Left ventricle myocardium superior (tissue), 1 donor: ENCODE measurements at regions of chrX and their contacts with region 1.

Region 1: DNA sequence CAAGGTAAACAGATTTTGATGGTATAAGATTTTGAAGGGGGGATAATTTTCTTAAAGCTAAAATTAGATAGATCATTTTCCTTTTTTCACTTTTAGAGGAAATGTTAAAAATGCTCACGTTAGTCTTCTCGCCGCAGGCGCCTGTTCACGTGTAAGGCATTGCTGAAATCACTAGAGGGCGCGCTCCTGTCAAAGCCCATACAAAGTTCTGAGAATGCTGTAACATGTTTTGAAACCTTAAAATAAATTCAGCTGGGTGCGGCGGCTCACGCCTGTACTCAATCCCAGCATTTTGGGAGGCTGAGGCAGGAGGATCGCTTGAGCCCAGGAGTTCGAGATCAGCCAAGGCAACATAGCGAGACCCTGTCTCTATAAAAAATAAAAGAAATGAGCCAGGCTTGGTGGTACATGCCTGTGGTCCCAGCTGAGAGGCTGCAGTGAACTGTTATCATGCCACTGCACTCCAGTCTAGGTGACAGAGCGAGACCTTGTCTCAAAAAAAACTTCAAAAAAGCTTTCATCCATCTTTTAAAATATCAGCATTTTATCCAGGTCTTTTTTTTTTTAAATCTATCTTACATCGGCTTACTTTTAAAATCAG is 138.0 kb downstream of the RBMX2 start:
- DNase-seq: peak; percentile 36
- ATAC-seq: peak; percentile 39

Region 2: DNA sequence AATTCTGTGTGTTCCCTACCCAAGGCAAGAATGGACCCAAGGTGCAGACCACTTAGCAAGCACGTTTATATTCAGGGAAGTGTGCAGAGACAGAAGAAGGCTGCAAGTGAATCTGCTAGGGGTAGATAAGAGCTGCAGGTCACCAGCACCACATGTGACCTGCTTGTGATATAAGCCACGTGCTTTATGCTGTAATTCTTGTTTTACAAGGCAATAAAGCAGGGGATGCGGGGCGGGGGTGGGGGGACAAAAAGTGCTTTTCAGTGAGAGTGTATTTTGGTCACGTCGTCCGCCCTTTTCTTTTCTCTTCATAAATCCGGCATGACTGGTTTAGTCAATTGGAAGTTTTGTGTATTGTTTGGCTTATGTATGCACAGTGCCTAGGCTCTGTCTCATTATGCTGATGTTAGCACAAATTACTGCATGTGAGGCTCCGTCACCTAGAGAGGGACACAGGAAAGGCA is 54.7 kb after region 1 on chrX:
- intact Hi-C with region 1: no loop called
- DNase-seq: no peak
- ATAC-seq: no peak

Region 3: GRCh38 chrX:130916636-130917422 is 377.0 kb after region 1 on chrX:
- intact Hi-C with region 1: loop called (anchors 10 kb)
- DNase-seq: no peak
- ATAC-seq: no peak